Uterus (tissue), 4 donors: ENCODE measurements at regions of chr12 and their contacts with region 1.

Region 1: DNA sequence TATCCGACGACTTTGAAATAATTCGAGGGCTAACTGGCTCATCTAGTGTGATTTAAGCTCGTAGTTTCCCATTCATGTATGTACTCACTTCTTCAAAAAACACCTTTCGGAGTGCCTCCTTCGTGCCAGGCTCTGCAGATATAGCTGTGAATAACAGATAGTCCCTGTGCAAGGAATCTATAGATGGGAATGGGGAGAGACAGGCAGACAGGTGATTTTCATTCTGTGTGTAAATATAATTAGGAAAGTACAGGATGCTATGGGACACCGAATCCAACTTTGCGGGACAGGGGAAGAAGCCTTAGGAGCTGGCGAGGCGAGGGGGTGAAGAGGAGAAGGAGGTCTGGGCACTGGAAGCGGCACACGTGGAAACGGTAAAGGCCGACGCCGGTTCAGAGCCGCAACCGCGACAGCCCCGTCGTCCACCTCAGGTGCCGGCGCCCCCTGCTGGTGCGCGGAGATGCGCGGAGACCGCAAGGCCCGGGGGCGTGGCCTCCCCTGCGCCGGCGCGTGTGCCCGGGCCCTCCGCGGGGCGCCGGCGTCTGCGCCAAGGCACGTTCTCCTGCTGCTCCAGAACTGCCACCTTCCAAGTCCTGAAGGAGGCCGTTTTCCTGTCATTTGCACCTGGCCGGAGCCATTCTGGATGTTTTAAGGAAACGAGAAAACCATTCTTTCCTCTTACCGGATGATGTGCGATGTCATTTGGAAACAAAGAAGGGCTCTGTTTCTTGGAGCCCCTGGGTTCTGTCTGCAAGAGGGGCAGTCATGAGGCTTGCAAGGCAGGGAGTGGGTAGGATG is 18.0 kb upstream of the CACNA1C start:
- DNase-seq: peak; percentile 88 to 90
- H3K4me3 ChIP-seq: peak overlapping the region; percentile 28 to 32
- H3K27ac ChIP-seq: peak overlapping the region; percentile 79 to 87
- H3K4me1 ChIP-seq: peaks cover 7 to 13% of the 10 kb centered on the region in 2 donors
- H3K27me3 ChIP-seq: no peaks in the 10 kb centered on the region
- CTCF ChIP-seq: peak; percentile 78 to 99 (median 97)
- POLR2A ChIP-seq: peak; percentile 41 to 42

Region 2: DNA sequence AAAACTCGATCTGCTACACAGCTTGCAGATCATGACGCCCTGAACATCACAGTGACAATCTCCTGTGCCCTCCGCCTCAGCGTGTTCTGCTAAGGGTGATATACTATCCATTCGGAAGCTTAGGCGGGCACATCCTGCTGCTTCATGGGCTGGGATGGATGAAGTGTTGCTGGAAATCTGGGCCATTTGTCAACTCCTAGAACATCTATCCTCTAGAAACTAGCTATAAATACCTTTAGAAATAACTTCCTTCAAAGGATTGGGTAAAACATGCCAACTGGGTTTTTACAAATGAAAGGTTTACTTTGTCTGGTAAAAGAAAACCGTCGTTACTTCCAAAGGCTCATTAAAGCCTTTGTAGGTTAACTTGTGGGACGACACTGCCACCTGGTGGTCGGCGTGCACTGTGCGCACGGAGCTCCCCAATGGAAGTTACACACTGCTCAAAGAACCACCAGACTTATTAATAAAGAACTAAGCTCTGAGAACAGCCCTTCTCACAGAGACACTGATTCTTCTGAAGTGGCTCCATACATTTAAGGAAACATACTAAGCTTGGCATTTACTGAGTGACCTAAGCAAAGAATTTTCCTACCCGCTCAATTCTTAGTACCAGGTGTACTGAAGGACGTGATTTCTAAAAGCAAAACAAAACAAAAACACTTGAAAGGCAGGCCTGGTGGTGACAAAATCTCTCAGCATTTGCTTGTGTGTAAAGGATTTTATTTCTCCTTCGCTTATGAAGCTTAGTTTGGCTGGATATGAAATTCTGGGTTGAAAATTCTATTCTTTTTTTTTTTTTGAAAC is 94.8 kb before region 1 on chr12:
- intact Hi-C with region 1: loop called (anchors 10 kb)
- DNase-seq: peak; percentile 89 to 90
- H3K4me3 ChIP-seq: peak overlapping the region in 1 of 2 donors; percentile 3
- H3K27ac ChIP-seq: peak overlapping the region; percentile 75 to 76
- H3K4me1 ChIP-seq: no peaks in the 10 kb centered on the region
- H3K27me3 ChIP-seq: no peaks in the 10 kb centered on the region
- CTCF ChIP-seq: peak; percentile 91 to 97 (median 95)
- POLR2A ChIP-seq: no peak

Region 3: DNA sequence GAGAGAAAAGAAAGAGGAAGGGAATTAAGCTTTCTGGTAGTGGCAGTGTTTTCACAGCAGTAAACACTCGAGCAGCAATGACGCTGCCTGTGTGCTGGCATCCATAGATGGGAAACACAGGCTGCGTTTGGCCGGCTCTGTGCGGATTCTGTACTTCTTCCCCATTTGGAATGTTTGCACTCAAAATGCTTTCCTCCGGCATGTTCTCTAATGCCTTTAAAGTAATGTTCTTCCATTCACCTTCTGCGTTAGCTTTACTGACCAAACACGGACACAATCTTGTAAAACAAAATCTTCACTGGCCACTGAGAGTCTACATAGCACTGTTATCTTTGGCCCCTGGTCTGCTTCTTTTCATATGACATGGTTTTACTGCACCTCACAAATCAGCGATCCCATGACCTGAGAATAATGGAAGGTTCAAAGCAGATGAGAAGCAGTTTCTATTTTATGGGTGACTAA is 61.9 kb before region 1 on chr12:
- intact Hi-C with region 1: loop called (anchors 10 kb)
- DNase-seq: peak; percentile 69 to 87
- H3K4me3 ChIP-seq: no peak overlapping the region
- H3K27ac ChIP-seq: peak overlapping the region; percentile 90 to 97
- H3K4me1 ChIP-seq: peaks cover 0 to 29% of the 10 kb centered on the region in 2 donors
- H3K27me3 ChIP-seq: no peaks in the 10 kb centered on the region
- CTCF ChIP-seq: no peak
- POLR2A ChIP-seq: peak; percentile 33 to 45

Region 4: GRCh38 chr12:2198005-2198501 is 163.2 kb after region 1 on chr12:
- intact Hi-C with region 1: no loop called
- DNase-seq: peak; percentile 56 to 60
- H3K4me3 ChIP-seq: no peak overlapping the region
- H3K27ac ChIP-seq: peak overlapping the region in 1 of 2 donors; percentile 67
- H3K4me1 ChIP-seq: no peaks in the 10 kb centered on the region
- H3K27me3 ChIP-seq: no peaks in the 10 kb centered on the region
- CTCF ChIP-seq: no peak
- POLR2A ChIP-seq: no peak